PC-3 (cell line): ENCODE measurements at regions of chr5 and their contacts with region 1.

Region 1: GRCh38 chr5:115634343-115635132 is 8.7 kb upstream of the TMED7 start:
- DNase-seq: peak; percentile 85
- ATAC-seq: peak; percentile 96
- H3K4me3 ChIP-seq: peak overlapping the region; percentile 39
- H3K27ac ChIP-seq: no peak overlapping the region
- H3K4me1 ChIP-seq: no peaks in the 10 kb centered on the region
- H3K27me3 ChIP-seq: no peaks in the 10 kb centered on the region
- CTCF ChIP-seq: peak; percentile 80

Region 2: GRCh38 chr5:115831163-115831768 is 196.7 kb after region 1 on chr5:
- CTCF ChIA-PET with region 1: no interaction called
- POLR2A ChIA-PET with region 1: no interaction called
- intact Hi-C with region 1: loop called (anchors 1 kb)
- DNase-seq: peak; percentile 66
- ATAC-seq: peak; percentile 81
- H3K4me3 ChIP-seq: no peak overlapping the region
- H3K27ac ChIP-seq: no peak overlapping the region
- H3K4me1 ChIP-seq: no peaks in the 10 kb centered on the region
- H3K27me3 ChIP-seq: no peaks in the 10 kb centered on the region
- CTCF ChIP-seq: peak; percentile 87

Region 3: GRCh38 chr5:115930626-115931337 is 296.2 kb after region 1 on chr5:
- CTCF ChIA-PET with region 1: no interaction called
- POLR2A ChIA-PET with region 1: interaction called, 20 read pairs
- intact Hi-C with region 1: no loop called
- DNase-seq: no peak
- ATAC-seq: no peak
- H3K4me3 ChIP-seq: no peak overlapping the region
- H3K27ac ChIP-seq: peak overlapping the region; percentile 43
- H3K4me1 ChIP-seq: peaks cover 7% of the 10 kb centered on the region; the same call in 1 of the 2 replicates
- H3K27me3 ChIP-seq: no peaks in the 10 kb centered on the region
- CTCF ChIP-seq: no peak

Region 4: GRCh38 chr5:116068028-116068632 is 433.6 kb after region 1 on chr5:
- CTCF ChIA-PET with region 1: interaction called, 4 read pairs
- POLR2A ChIA-PET with region 1: interaction called, 5 read pairs
- intact Hi-C with region 1: loop called (anchors 1 kb)
- DNase-seq: peak; percentile 61
- ATAC-seq: peak; percentile 45; the same call in 1 of the 2 replicates
- H3K4me3 ChIP-seq: no peak overlapping the region
- H3K27ac ChIP-seq: no peak overlapping the region
- H3K4me1 ChIP-seq: no peaks in the 10 kb centered on the region
- H3K27me3 ChIP-seq: no peaks in the 10 kb centered on the region
- CTCF ChIP-seq: peak; percentile 84